ENCODE measurements at regions of chr21 and their contacts with region 1.

Region 1: DNA sequence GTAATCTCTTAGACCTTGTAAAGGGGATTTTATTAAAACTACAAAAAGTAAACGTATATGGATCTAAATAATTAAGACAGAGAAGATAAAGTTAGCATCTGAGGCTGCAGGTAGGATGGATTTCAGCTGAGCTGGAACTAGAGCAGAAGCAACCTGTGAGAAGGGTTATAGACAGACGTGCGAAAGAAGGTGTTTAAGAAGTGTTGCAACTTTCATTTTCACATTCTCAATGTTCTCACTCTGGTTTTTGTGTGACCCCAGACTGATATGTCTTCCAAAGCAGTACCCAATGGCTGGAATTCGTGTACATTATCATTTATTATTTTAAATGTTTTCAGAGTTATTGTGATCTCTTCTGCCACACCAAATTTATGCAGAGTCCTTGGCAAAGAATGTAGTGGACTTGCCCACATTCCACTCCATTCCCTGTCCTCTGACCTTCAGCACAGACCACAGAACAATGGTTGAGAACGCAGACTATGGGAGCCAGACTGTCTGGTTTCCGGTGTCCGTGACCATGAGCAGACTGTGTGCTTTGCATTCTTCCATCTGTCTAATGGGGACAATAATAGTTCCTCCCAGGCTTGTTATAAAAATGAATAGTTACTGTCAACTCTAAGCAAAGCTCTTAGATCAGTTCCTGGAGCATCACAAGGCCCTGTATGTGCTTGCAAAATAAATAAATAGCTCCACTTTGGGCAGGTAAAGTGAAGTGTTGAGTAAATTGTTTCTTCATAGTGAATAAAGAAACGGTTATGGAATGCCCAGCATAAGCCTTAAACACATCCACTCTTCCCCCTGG is 140.6 kb upstream of the SAMSN1 start:
- DNase-seq: peak; percentile 52
- ATAC-seq: peak; percentile 32
- H3K4me3 ChIP-seq: peak overlapping the region in 3 of 5 experiments; percentile 5 to 18 (median 6)
- H3K4me3 Mint-ChIP-seq: peak overlapping the region; percentile 78
- H3K27ac ChIP-seq: peak overlapping the region; percentile 64 to 80
- H3K27ac Mint-ChIP-seq: peak overlapping the region; percentile 88
- H3K4me1 ChIP-seq: peaks cover 57% of the 10 kb centered on the region in 2 donors
- H3K4me1 Mint-ChIP-seq: peaks cover 56% of the 10 kb centered on the region
- H3K27me3 ChIP-seq: no peaks in the 10 kb centered on the region
- H3K27me3 Mint-ChIP-seq: no peaks in the 10 kb centered on the region
- CTCF ChIP-seq: no peak

Region 2: GRCh38 chr21:14382835-14383594 is 303.7 kb before region 1 on chr21 and contains the start of gene HSPA13:
- CTCF ChIA-PET with region 1: no interaction called
- POLR2A ChIA-PET with region 1: no interaction called
- intact Hi-C with region 1: loop called (anchors 5 kb)
- DNase-seq: peak; percentile 100
- ATAC-seq: peak; percentile 93
- H3K4me3 ChIP-seq: peak within 1 kb of the TSS; percentile 85 to 95 (median 88)
- H3K4me3 Mint-ChIP-seq: peak within 1 kb of the TSS; percentile 100
- H3K27ac ChIP-seq: peak within 1 kb of the TSS; percentile 91 to 96
- H3K27ac Mint-ChIP-seq: peak within 1 kb of the TSS; percentile 98
- H3K4me1 ChIP-seq: peaks cover 10 to 11% of the 10 kb centered on the region in 2 donors
- H3K4me1 Mint-ChIP-seq: peaks cover 37% of the 10 kb centered on the region
- H3K27me3 ChIP-seq: no peaks in the 10 kb centered on the region
- H3K27me3 Mint-ChIP-seq: no peaks in the 10 kb centered on the region
- CTCF ChIP-seq: no peak
- total RNA-seq, gene HSPA13: 19.1 and 19.3 TPM in 2 replicates

Region 3: DNA sequence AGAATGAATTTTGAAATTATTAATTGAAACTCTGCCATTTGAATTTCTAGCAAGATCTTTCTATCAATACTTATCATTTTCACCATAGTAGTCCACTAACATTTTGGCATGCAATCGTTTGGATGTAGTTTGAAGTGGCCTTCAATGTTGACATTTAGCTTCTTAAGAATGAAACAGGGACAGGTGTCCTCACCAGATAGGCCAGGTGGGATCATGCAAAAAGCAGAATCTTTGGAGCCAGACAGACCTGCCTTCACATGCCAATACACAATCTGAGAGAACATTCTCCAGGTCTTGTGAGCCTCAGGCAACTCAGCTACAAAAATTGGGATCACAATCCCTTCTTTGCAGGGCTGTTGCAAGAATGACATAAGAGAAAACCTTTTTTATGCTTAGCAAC is 285.4 kb before region 1 on chr21:
- CTCF ChIA-PET with region 1: no interaction called
- POLR2A ChIA-PET with region 1: no interaction called
- intact Hi-C with region 1: no loop called
- DNase-seq: no peak
- ATAC-seq: no peak
- H3K4me3 ChIP-seq: no peak overlapping the region
- H3K4me3 Mint-ChIP-seq: no peak overlapping the region
- H3K27ac ChIP-seq: no peak overlapping the region
- H3K27ac Mint-ChIP-seq: no peak overlapping the region
- H3K4me1 ChIP-seq: no peaks in the 10 kb centered on the region
- H3K4me1 Mint-ChIP-seq: peaks cover 1% of the 10 kb centered on the region
- H3K27me3 ChIP-seq: no peaks in the 10 kb centered on the region
- H3K27me3 Mint-ChIP-seq: no peaks in the 10 kb centered on the region
- CTCF ChIP-seq: no peak

Region 4: DNA sequence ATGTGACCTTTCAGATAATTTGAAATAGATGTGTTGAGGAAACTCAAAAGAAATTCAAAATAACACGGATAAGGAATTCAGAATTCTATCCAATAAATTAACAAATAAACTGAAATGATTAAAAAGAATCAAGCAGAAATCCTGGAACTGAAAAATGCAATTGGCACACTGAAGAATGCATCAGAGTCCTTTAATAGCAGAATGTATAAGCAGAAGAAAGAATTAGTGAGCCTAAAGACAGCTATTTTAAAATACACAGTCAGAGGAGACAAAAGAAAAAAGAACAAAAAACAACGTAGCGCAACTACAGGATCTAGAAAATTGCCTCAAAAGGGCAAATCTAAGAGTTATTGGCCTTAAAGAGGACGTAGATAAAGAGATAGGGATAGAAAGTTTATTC is 41.0 kb before region 1 on chr21:
- CTCF ChIA-PET with region 1: no interaction called
- POLR2A ChIA-PET with region 1: no interaction called
- intact Hi-C with region 1: no loop called
- DNase-seq: no peak
- ATAC-seq: no peak
- H3K4me3 ChIP-seq: no peak overlapping the region
- H3K4me3 Mint-ChIP-seq: no peak overlapping the region
- H3K27ac ChIP-seq: no peak overlapping the region
- H3K27ac Mint-ChIP-seq: no peak overlapping the region
- H3K4me1 ChIP-seq: no peaks in the 10 kb centered on the region
- H3K4me1 Mint-ChIP-seq: no peaks in the 10 kb centered on the region
- H3K27me3 ChIP-seq: no peaks in the 10 kb centered on the region
- H3K27me3 Mint-ChIP-seq: no peaks in the 10 kb centered on the region
- CTCF ChIP-seq: no peak

Region 5: DNA sequence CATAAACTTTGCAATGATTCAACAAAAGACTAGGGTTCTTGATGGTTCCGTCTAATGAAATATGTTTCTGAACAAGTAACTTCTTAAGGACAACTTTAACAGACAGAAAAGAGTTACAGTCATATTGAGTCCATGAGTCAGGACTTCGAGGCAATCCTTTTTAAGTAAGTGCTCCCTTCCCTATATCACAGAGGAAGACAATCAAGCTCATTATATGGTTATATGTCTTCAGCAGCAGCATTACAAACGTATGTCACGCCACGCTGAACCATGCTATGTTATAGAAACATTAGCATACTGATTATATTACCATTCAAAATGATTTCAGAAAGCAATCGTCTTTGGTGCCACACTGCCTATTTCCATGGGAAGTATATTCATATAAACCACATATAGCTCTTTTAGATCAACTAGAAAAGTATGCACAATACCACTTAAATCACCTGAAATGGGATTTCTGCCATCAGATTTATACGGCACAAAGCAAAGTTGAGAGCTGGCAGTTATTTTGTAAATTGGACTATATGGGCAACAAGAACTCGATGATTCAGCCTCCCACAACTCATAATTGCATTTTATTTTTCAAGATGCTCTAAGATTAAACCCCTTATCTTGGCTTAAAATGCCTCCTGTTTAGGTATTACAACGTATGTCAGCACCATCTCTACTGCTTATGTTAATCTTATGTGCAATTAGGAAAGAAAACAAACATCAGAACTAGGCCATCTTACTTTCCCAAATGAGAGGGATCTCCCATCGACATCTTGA is 29.2 kb before region 1 on chr21:
- CTCF ChIA-PET with region 1: no interaction called
- POLR2A ChIA-PET with region 1: no interaction called
- intact Hi-C with region 1: no loop called
- DNase-seq: no peak
- ATAC-seq: no peak
- H3K4me3 ChIP-seq: no peak overlapping the region
- H3K4me3 Mint-ChIP-seq: no peak overlapping the region
- H3K27ac ChIP-seq: no peak overlapping the region
- H3K27ac Mint-ChIP-seq: no peak overlapping the region
- H3K4me1 ChIP-seq: no peaks in the 10 kb centered on the region
- H3K4me1 Mint-ChIP-seq: no peaks in the 10 kb centered on the region
- H3K27me3 ChIP-seq: no peaks in the 10 kb centered on the region
- H3K27me3 Mint-ChIP-seq: no peaks in the 10 kb centered on the region
- CTCF ChIP-seq: no peak

Region 6: GRCh38 chr21:14675774-14676530 is 10.7 kb before region 1 on chr21:
- CTCF ChIA-PET with region 1: interaction called, 17 read pairs
- POLR2A ChIA-PET with region 1: interaction called, 3 read pairs
- intact Hi-C with region 1: loop called (anchors 1 kb)
- DNase-seq: peak; percentile 67
- ATAC-seq: peak; percentile 80
- H3K4me3 ChIP-seq: peak overlapping the region in 3 of 5 experiments; percentile 10 to 47 (median 24)
- H3K4me3 Mint-ChIP-seq: peak overlapping the region; percentile 57
- H3K27ac ChIP-seq: peak overlapping the region; percentile 74 to 85
- H3K27ac Mint-ChIP-seq: peak overlapping the region; percentile 91
- H3K4me1 ChIP-seq: peaks cover 44 to 46% of the 10 kb centered on the region in 2 donors
- H3K4me1 Mint-ChIP-seq: peaks cover 59% of the 10 kb centered on the region
- H3K27me3 ChIP-seq: no peaks in the 10 kb centered on the region
- H3K27me3 Mint-ChIP-seq: no peaks in the 10 kb centered on the region
- CTCF ChIP-seq: no peak

Region 7: DNA sequence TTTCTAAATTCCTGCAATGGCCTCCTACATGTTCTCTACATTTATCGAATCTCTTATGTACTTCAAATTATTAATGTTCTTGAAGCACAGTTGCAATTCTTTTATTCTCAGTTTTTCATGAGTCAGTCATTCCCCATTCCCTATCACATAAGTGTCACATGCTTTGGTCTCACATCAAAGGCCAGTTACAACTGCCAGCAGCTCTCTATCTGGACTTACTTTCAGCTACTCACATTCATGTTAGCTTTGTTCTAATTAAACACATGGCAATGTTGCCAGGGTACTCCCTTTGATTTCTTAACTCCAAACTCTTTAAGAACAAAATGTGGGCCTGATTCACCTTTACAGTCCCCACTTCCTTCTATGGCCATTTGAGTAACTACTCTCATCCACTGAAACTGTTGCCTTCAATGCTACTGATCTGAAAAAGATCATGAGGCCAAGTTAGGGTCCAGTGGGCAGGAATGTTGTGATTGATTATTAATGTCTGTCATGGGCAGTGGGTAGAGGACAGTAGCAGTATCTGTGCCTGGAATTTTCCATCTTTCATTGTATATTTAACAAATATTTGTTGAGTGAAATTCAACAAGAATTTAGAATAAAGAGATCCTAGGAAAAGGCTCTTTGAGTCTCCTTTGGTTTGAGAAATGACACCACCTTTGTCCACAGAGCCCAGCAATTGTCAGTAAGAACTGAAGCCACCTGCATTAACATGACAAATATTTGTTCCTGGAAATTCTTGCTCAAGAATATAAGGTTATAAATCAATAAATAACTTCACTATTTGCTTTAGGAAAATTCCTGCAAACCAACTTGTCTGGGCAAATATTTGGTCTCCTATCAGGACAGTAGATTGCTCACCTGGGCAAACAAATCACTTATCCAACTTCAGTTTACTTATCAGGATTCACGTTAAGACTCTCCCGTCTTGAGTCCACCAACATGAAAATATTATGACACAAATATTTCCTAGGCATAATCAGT is 13.1 kb after region 1 on chr21:
- CTCF ChIA-PET with region 1: no interaction called
- POLR2A ChIA-PET with region 1: no interaction called
- intact Hi-C with region 1: no loop called
- DNase-seq: no peak
- ATAC-seq: no peak
- H3K4me3 ChIP-seq: no peak overlapping the region
- H3K4me3 Mint-ChIP-seq: no peak overlapping the region
- H3K27ac ChIP-seq: no peak overlapping the region
- H3K27ac Mint-ChIP-seq: no peak overlapping the region
- H3K4me1 ChIP-seq: no peaks in the 10 kb centered on the region
- H3K4me1 Mint-ChIP-seq: no peaks in the 10 kb centered on the region
- H3K27me3 ChIP-seq: no peaks in the 10 kb centered on the region
- H3K27me3 Mint-ChIP-seq: no peaks in the 10 kb centered on the region
- CTCF ChIP-seq: no peak